Sciatic nerve (tissue), 2 donors: ENCODE measurements at regions of chr11 and their contacts with region 1.

Region 1: DNA sequence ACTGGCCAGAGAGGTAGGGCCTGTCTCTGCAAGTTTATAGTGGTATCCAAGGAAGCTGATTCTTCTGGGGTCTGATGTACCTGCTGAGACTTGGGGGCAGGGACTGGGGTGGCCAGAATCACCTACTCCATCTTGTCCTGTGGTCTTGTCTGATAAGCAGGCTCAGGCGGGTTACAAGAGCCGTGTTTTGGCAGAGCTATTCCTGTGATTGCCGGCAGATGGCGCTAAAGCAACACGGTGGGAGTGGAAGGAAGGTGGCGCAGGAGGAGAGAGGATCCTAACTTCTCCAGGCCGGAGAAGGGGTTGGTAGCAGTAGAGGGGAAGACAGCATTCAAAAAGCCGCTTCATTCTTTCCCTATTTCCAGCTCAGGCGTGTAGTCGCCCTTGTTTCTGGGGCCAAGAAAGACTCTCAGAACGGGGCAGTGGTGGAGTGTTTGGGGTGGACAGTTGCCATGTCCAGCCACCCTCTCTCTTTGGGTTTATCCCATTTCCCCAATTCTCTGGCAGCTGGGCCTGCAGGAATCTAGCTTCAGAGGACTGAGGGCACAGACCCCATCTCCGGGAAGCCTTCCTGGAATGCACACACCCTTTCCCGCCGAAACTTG is 15.1 kb downstream of the CHRM1 start:
- DNase-seq: peak; percentile 91
- ATAC-seq: peak; percentile 90

Region 2: GRCh38 chr11:63023841-63024648 is 118.0 kb after region 1 on chr11:
- intact Hi-C with region 1: loop called (anchors 5 kb)
- DNase-seq: peak; percentile 95
- ATAC-seq: peak; percentile 94